ENCODE measurements at regions of chr20 and their contacts with region 1.

Region 1: GRCh38 chr20:46575937-46576461 is 25.5 kb upstream of the OCSTAMP start:
- DNase-seq: no peak
- H3K4me3 Mint-ChIP-seq: no peak overlapping the region
- H3K27ac Mint-ChIP-seq: no peak overlapping the region
- H3K4me1 Mint-ChIP-seq: peaks cover 9% of the 10 kb centered on the region
- H3K27me3 Mint-ChIP-seq: peaks cover 30% of the 10 kb centered on the region

Region 2: DNA sequence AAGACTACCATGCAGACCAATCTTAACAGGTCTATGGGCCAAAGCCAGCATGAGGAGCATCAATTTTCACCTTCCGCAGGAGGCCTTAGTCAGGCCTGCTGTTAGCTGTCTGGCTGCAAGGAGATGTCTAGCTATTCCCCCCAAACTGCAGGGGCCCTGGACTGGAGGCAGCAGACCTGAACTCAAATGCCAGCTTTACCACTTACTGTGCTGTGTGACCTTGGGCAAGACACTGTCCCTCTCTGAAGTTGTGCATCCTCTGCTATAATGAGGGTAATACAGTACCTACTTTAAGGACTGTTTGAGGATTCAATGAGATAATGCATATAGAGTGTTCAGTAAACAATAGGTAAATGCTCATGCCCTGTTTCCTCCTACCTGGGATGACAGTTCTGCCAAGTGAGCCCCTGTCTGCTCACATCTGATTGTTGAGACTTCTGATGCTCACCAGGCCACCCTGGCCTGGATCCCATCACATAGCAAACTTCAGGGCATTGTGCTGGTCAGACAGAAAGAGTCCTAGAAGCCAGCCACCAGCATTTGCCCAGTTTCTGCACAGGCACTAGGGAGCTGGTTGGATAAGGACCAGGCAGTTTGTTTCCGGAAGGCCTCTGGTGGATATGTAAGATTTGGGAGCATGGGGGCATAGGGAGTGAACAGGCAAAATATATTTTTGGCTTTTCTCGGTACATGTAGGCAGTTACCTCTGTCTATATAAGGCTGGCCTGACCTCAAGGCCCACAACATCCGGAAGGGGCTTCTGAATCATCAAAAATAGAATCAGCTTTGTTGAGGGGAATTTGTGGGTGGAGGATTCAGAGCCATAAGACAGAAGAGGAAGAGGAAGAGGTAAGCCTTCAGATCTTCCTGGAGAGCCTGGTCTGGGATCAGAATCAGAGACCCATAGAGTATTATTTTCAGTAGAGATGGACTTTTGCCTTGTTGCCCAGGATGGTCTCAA is 23.3 kb before region 1 on chr20:
- intact Hi-C with region 1: loop called (anchors 1 kb)
- DNase-seq: peak; percentile 61
- H3K4me3 Mint-ChIP-seq: peak overlapping the region; percentile 35
- H3K27ac Mint-ChIP-seq: peak overlapping the region; percentile 91
- H3K4me1 Mint-ChIP-seq: peaks cover 68% of the 10 kb centered on the region
- H3K27me3 Mint-ChIP-seq: no peaks in the 10 kb centered on the region

Region 3: GRCh38 chr20:46651091-46651962 is 75.3 kb after region 1 on chr20 and contains the start of gene SLC13A3:
- intact Hi-C with region 1: no loop called
- DNase-seq: no peak
- H3K4me3 Mint-ChIP-seq: no peak within 1 kb of the TSS
- H3K27ac Mint-ChIP-seq: no peak within 1 kb of the TSS
- H3K4me1 Mint-ChIP-seq: peaks cover 4% of the 10 kb centered on the region
- H3K27me3 Mint-ChIP-seq: peaks cover 47% of the 10 kb centered on the region
- total RNA-seq, gene SLC13A3: 0.24 TPM in 1 of 2 replicates, not detected in the other

Measured in activated T-helper 1 cell treated with anti-CD3 and anti-CD28 coated beads, Interleukin-12 subunit alpha, Interleukin-12 subunit beta, Interleukin-2, Interleukin-4 antibody, amounts not matched to agents 30 ng/mL and 10 ng/mL and 1 ng/mL, durations not matched to agents 14 hours and 24 hours and 36 hours (primary cell).